Mammary epithelial cell (primary cell): ENCODE measurements at regions of chr14 and their contacts with region 1.

Region 1: GRCh38 chr14:75350505-75351060 is 72.0 kb downstream of the FOS start:
- DNase-seq: no peak
- H3K4me3 ChIP-seq: no peak overlapping the region
- H3K27ac ChIP-seq: no peak overlapping the region
- H3K4me1 ChIP-seq: no peaks in the 10 kb centered on the region
- H3K27me3 ChIP-seq: no peaks in the 10 kb centered on the region
- CTCF ChIP-seq: no peak

Region 2: DNA sequence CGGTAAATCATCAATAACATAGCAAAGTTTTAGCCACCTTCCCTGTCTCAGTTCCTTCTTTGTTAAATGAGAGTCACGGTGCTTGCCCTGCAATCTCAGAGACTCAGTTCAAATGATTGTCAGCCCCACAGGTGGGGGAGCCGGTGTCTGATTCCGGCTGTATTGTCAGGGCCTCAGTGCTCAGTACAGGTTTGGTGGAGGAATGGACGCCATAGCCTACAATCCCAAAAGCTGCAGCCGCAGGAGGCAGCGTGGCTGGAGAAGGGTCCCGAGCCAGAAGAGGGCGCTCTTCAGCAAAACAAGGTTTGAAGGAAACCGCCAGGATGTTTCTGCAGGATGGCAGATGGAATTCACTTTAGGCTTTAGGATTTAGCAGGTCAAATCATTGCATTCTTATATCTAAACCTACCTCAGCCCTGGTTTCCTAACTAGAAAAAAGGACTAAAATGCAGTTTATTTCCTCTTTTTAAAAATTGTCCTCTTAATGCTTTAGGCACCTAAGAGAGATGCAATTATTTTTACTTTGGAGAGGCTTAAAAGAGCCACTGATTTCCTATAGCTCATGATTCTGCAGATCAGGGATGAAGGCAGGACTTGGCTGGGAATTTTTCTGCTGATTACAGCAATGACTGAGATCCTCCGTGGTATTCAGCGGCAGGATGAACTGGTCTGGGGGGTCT is 42.7 kb before region 1 on chr14:
- CTCF ChIA-PET with region 1: no interaction called
- dilution Hi-C with region 1: no loop called
- in situ Hi-C with region 1: no loop called
- intact Hi-C with region 1: no loop called
- DNase-seq: peak; percentile 65
- H3K4me3 ChIP-seq: no peak overlapping the region
- H3K27ac ChIP-seq: no peak overlapping the region
- H3K4me1 ChIP-seq: no peaks in the 10 kb centered on the region
- H3K27me3 ChIP-seq: no peaks in the 10 kb centered on the region
- CTCF ChIP-seq: peak; percentile 87 to 93

Region 3: GRCh38 chr14:75440733-75441477 is 90.3 kb after region 1 on chr14:
- CTCF ChIA-PET with region 1: no interaction called
- dilution Hi-C with region 1: loop called (anchors 5 kb)
- in situ Hi-C with region 1: no loop called
- intact Hi-C with region 1: no loop called
- DNase-seq: no peak
- H3K4me3 ChIP-seq: no peak overlapping the region
- H3K27ac ChIP-seq: no peak overlapping the region
- H3K4me1 ChIP-seq: no peaks in the 10 kb centered on the region
- H3K27me3 ChIP-seq: no peaks in the 10 kb centered on the region
- CTCF ChIP-seq: no peak